Activated naive CD4-positive, alpha-beta T cell treated with anti-CD3 and anti-CD28 coated beads for 36 hours (primary cell): ENCODE measurements at regions of chr16 and their contacts with region 1.

Region 1: DNA sequence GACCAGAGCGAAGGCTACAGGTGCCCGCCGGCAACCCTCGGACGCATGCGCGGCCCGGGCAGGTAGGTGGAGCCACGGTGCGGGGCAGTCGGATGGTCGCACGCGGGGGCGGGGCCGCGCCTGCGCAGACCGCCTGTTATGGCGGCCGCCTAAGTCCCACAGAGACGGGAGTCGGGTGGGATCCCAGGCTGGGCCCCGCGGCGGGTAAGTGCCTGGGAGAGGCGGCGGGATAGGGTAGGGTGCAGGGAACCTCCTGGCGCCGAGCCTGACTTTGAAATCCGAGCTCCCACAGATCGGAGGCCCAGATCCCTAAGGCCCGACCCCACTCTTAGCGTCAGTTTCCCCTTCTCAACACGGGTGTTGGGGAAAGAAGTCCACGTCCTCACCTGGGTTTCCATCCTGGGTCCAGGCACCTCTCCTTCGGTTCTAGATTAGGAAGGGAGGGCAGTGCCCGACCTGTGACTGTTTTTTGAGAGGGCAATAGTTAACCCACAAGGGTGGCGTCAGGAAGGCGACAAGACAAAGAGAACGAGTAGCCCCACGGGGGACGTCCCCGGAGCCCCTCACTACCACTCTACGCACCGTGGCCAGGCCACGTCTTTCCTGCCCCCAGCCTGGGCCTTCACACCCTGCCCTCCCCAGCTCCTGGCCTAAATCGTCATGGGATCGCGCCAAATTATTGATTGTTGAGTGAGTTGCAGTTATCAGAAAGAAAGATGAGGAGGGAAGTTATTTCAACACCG is at the start of gene METTL22:
- DNase-seq: peak; percentile 92
- H3K4me3 Mint-ChIP-seq: peak within 1 kb of the TSS; percentile 97
- H3K27ac Mint-ChIP-seq: peak within 1 kb of the TSS; percentile 70
- H3K4me1 Mint-ChIP-seq: peaks cover 27% of the 10 kb centered on the region
- H3K27me3 Mint-ChIP-seq: no peaks in the 10 kb centered on the region
- total RNA-seq, gene METTL22: 43.2 to 48.4 TPM

Region 2: GRCh38 chr16:8696880-8697279 is 75.1 kb after region 1 on chr16:
- CTCF ChIA-PET with region 1: no interaction called
- intact Hi-C with region 1: no loop called
- DNase-seq: no peak
- H3K4me3 Mint-ChIP-seq: no peak overlapping the region
- H3K27ac Mint-ChIP-seq: no peak overlapping the region
- H3K4me1 Mint-ChIP-seq: no peaks in the 10 kb centered on the region
- H3K27me3 Mint-ChIP-seq: no peaks in the 10 kb centered on the region

Region 3: DNA sequence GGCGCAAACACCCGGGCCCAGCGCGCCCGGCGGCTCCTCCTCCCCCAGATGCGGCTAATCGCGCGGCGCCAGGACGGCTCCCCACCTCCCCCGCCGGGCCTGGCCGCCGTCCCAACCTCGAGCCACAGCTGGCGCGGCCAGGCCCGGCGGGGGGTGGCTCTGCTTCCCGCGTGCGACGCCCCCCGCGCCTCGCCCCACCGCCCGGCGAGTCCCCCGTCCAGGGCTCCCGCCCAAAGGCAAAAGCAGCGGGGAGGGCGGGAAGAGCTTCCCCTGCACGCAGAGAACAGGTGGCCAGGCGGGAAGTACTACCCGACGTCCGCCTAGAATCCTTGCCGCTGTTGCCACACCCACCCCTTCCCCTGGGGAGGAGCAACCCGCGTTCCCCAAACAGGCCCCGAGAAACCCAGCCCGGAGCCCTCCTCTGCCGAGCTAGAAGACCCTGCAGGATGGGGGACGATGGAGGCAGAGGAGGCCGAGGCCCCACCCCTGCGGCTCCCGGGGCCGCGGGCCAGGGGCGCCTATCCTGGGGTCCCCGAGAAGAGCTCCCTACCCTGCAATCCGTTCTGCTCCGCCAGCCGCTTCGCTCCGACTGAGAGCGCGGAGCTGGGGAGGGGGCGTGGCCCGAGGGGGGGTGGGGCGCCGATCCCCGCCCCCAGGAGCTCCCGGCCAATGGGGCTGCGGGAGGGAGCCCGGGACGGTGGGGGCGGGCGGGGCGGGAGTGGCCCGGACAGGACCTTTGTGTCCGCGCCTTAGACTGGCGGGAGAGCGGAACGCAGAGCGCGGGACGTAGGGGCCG is 246.9 kb after region 1 on chr16 and contains the start of gene CARHSP1:
- CTCF ChIA-PET with region 1: no interaction called
- intact Hi-C with region 1: loop called (anchors 1 kb)
- DNase-seq: peak; percentile 81
- H3K4me3 Mint-ChIP-seq: peak within 1 kb of the TSS; percentile 89
- H3K27ac Mint-ChIP-seq: peak within 1 kb of the TSS; percentile 83
- H3K4me1 Mint-ChIP-seq: peaks cover 36% of the 10 kb centered on the region
- H3K27me3 Mint-ChIP-seq: no peaks in the 10 kb centered on the region
- total RNA-seq, gene CARHSP1: 46.5 to 49.6 TPM